Activated B cell treated with CpG ODN at 0.5 μM for 24 hours (primary cell): ENCODE measurements at regions of chr20 and their contacts with region 1.

Region 1: GRCh38 chr20:1952737-1953530 is 40.9 kb downstream of the PDYN start:
- DNase-seq: no peak
- ATAC-seq: peak; percentile 15
- H3K4me3 Mint-ChIP-seq: peak overlapping the region; percentile 55
- H3K27ac Mint-ChIP-seq: peak overlapping the region; percentile 99
- H3K4me1 Mint-ChIP-seq: peaks cover 45% of the 10 kb centered on the region
- H3K27me3 Mint-ChIP-seq: no peaks in the 10 kb centered on the region
- CTCF ChIP-seq: no peak

Region 2: DNA sequence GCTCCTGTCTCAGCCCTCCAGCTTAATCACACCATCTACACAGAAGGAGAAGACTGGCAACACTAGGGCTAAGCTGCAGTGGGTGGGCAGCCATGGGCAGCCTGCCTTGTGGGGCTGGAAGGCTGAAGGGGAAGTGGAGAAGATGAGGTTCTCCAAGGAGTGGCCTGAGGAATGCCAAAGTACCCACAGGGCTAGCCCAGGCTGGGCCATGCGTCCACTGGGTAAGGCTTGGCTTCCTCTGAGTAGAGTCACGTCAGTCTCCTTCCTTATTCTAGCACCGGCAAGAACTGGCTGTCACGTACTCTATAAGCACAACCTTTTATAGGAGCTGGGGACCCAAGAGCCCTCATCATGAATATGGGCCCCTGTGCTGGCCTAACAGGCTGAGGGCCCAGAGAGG is 168.3 kb before region 1 on chr20:
- CTCF ChIA-PET with region 1: no interaction called
- POLR2A ChIA-PET with region 1: interaction called, 12 read pairs
- intact Hi-C with region 1: no loop called
- DNase-seq: no peak
- ATAC-seq: no peak
- H3K4me3 Mint-ChIP-seq: no peak overlapping the region
- H3K27ac Mint-ChIP-seq: no peak overlapping the region
- H3K4me1 Mint-ChIP-seq: peaks cover 11% of the 10 kb centered on the region
- H3K27me3 Mint-ChIP-seq: peaks cover 35% of the 10 kb centered on the region
- CTCF ChIP-seq: no peak

Region 3: DNA sequence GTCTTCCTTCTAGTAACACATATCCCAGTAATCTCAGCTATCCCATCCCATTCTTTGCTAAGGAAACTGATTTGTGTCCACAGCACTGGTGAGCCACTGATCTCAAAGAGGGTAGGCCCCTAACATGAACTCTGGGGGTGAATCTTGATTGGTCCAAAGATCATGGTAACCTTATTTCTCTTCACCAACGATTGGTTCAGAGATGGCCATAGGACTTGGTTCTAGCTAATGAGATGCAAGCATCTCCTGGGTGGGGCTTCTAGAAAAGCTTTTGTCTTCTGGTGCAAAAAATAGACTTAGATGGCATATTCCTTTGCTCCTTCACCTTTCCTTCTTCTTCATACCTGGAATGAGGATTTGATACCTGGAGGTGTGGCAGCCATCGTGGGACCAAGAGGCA is 101.5 kb before region 1 on chr20:
- CTCF ChIA-PET with region 1: no interaction called
- POLR2A ChIA-PET with region 1: interaction called, 15 read pairs
- intact Hi-C with region 1: loop called (anchors 1 kb)
- DNase-seq: no peak
- ATAC-seq: no peak
- H3K4me3 Mint-ChIP-seq: peak overlapping the region; percentile 63
- H3K27ac Mint-ChIP-seq: peak overlapping the region; percentile 85
- H3K4me1 Mint-ChIP-seq: peaks cover 66% of the 10 kb centered on the region
- H3K27me3 Mint-ChIP-seq: no peaks in the 10 kb centered on the region
- CTCF ChIP-seq: no peak

Region 4: GRCh38 chr20:1900321-1900801 is 52.6 kb before region 1 on chr20:
- CTCF ChIA-PET with region 1: interaction called, 4 read pairs
- POLR2A ChIA-PET with region 1: interaction called, 21 read pairs
- intact Hi-C with region 1: loop called (anchors 1 kb)
- DNase-seq: no peak
- ATAC-seq: peak; percentile 11
- H3K4me3 Mint-ChIP-seq: no peak overlapping the region
- H3K27ac Mint-ChIP-seq: no peak overlapping the region
- H3K4me1 Mint-ChIP-seq: peaks cover 49% of the 10 kb centered on the region
- H3K27me3 Mint-ChIP-seq: no peaks in the 10 kb centered on the region
- CTCF ChIP-seq: no peak

Region 5: GRCh38 chr20:2206957-2207769 is 254.2 kb after region 1 on chr20:
- CTCF ChIA-PET with region 1: no interaction called
- POLR2A ChIA-PET with region 1: interaction called, 10 read pairs
- intact Hi-C with region 1: no loop called
- DNase-seq: peak; percentile 76
- ATAC-seq: peak; percentile 76
- H3K4me3 Mint-ChIP-seq: peak overlapping the region; percentile 82
- H3K27ac Mint-ChIP-seq: peak overlapping the region; percentile 38
- H3K4me1 Mint-ChIP-seq: peaks cover 19% of the 10 kb centered on the region
- H3K27me3 Mint-ChIP-seq: no peaks in the 10 kb centered on the region
- CTCF ChIP-seq: no peak